GM10248 (cell line): ENCODE measurements at regions of chr18 and their contacts with region 1.

Region 1: GRCh38 chr18:51197661-51198424 is at the start of gene MEX3C:
- DNase-seq: peak; percentile 95
- CTCF ChIP-seq: no peak

Region 2: GRCh38 chr18:51120809-51121596 is 76.8 kb before region 1 on chr18:
- CTCF ChIA-PET with region 1: no interaction called
- POLR2A ChIA-PET with region 1: no interaction called
- DNase-seq: no peak
- CTCF ChIP-seq: no peak

Region 3: GRCh38 chr18:51182824-51183223 is 15.0 kb before region 1 on chr18:
- CTCF ChIA-PET with region 1: interaction called, 34 read pairs
- POLR2A ChIA-PET with region 1: interaction called, 16 read pairs
- DNase-seq: no peak
- CTCF ChIP-seq: no peak